ENCODE measurements at regions of chr3 and their contacts with region 1.

Region 1: GRCh38 chr3:37855363-37855970 is 6.2 kb upstream of the CTDSPL start:
- DNase-seq: peak; percentile 93
- ATAC-seq: peak; percentile 70

Region 2: DNA sequence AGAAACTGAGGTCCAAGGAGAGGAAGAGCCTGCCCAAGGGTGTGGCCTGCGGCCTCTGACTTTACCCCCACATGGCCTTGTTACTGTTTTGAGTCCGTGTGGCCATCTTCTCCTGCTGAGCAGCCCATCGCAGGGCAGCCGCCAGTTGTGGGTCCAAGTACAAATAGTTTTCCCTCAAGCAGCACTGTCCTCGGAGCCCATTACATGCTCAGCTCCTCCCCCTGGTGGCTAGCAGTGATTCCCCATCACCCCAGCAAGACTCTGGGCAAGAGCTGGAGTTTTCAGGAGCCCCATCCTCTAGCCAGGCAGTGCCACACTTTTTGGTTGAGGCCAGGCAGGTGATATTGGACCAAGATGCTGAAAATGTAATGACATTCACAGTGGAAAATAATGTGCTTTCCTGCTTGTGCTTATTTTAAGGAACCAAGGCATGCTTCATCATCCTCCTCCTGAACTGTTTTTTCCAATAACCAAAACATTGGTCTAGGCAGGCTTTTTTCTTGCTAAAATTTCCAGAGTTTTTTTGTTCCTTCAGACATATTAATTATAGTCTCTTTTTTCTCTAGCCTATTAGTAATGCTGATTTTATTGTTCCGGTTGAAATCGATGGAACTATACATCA is 111.9 kb after region 1 on chr3:
- intact Hi-C with region 1: loop called (anchors 2 kb)
- DNase-seq: peak; percentile 84
- ATAC-seq: peak; percentile 85

Region 3: GRCh38 chr3:38136777-38137614 is 281.5 kb after region 1 on chr3 and contains the start of gene ACAA1:
- intact Hi-C with region 1: loop called (anchors 10 kb)
- DNase-seq: peak; percentile 99
- ATAC-seq: peak; percentile 98
- total RNA-seq, gene ACAA1: 67.6 TPM

Measured in sciatic nerve (tissue), 2 donors.